Caco-2 (cell line): ENCODE measurements at regions of chr10 and their contacts with region 1.

Region 1: DNA sequence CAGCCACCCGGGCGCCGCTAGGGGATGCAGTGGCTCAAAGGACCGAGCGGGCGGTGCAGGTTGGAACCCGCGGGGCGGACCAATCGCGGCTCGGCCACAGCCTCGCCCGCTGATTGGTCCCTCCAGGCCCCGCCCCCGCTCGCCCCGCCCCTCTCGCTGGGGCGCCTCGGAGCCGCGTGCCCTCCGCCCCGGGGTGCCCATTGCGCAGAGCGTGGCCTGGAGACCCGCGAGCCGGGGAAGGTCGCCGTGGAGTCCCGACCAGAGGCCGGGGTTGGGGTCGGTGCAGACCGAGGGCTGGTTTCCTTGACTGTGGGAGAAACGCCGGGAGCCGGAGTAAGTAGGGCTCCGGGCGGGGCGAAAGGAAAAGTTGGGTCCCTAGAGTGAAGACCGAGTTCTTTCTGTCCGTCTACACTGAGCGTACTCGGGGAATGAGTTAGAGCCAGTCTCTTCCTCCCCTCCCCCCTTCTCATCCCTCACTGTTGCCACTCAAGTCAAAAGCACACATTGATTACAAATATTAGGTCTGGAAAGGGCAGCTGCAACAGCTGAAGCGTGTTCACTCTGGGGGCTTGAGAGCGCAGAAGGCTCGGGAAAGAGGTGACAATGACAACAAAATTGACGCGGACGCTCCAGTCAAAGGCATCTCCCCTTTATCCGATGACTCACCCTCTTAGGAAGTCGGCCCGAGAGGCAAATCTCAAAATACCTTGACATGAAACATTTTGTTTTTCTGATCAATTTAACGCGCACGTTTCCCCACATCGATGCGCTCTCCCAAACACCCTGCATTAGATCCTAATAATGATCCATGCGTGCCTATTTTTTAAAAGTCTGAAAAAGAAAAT is 820 bp upstream of the GATA3 start:
- DNase-seq: peak; percentile 93 to 98
- H3K4me3 ChIP-seq: peak overlapping the region; percentile 68
- H3K4me3 Mint-ChIP-seq: peak overlapping the region; percentile 87
- H3K27ac Mint-ChIP-seq: peak overlapping the region; percentile 87
- H3K4me1 ChIP-seq: peaks cover 27% of the 10 kb centered on the region
- H3K4me1 Mint-ChIP-seq: peaks cover 29% of the 10 kb centered on the region
- H3K27me3 ChIP-seq: no peaks in the 10 kb centered on the region
- H3K27me3 Mint-ChIP-seq: no peaks in the 10 kb centered on the region
- CTCF ChIP-seq: peak; percentile 96 to 98

Region 2: DNA sequence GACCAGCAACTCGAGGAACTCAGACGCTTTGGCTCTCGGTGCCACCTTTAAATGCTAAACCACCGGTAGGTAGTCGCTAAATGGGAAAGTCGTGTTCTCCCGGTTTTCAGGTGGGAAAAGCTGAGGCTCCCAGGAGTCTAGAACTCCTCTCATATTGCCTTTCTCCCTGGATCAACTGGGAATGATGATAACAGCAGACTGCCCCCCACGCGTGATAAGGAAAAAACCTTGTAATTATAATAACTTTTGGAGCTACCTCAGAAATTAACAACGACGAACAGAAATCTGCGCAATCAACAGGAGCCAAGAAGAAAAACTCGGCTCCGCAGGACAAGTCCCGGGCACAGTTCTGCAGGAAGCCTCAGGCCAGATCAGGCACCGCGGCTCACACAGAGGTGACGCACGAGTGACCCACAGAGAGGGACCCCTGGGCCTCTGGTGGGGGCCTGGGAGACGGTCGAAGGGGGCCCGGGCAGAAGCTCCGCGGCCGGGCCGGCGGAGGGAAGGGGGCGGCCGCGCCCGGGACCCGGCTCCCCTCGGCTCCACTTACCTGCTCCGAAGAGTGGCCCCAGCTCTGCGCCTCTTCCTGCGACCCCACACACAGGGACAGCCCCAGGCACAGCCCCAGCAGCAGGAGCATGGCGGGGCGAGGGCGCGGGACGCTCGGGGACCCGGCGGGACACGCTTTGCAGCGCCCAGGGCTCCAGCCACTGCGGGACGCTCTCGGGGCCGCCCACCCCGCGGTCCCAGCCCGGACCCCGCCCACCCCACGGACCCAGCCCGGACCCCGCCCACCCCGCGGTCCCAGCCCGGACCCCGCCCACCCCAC is 387.2 kb before region 1 on chr10 and contains the start of gene ITIH5:
- CTCF ChIA-PET with region 1: no interaction called
- POLR2A ChIA-PET with region 1: no interaction called
- intact Hi-C with region 1: no loop called
- DNase-seq: no peak
- H3K4me3 ChIP-seq: no peak within 1 kb of the TSS
- H3K4me3 Mint-ChIP-seq: no peak within 1 kb of the TSS
- H3K27ac Mint-ChIP-seq: no peak within 1 kb of the TSS
- H3K4me1 ChIP-seq: peaks cover 2% of the 10 kb centered on the region
- H3K4me1 Mint-ChIP-seq: peaks cover 7% of the 10 kb centered on the region
- H3K27me3 ChIP-seq: no peaks in the 10 kb centered on the region
- H3K27me3 Mint-ChIP-seq: no peaks in the 10 kb centered on the region
- CTCF ChIP-seq: no peak
- total RNA-seq, gene ITIH5: 0.18 and 0.51 TPM in 2 replicates

Region 3: GRCh38 chr10:7872041-7872442 is 181.6 kb before region 1 on chr10:
- CTCF ChIA-PET with region 1: interaction called, 3 read pairs
- POLR2A ChIA-PET with region 1: no interaction called
- intact Hi-C with region 1: loop called (anchors 5 kb)
- DNase-seq: peak in 1 of 2 experiments; percentile 21
- H3K4me3 ChIP-seq: peak overlapping the region; percentile 25
- H3K4me3 Mint-ChIP-seq: peak overlapping the region; percentile 66
- H3K27ac Mint-ChIP-seq: no peak overlapping the region
- H3K4me1 ChIP-seq: peaks cover 26% of the 10 kb centered on the region
- H3K4me1 Mint-ChIP-seq: peaks cover 11% of the 10 kb centered on the region
- H3K27me3 ChIP-seq: no peaks in the 10 kb centered on the region
- H3K27me3 Mint-ChIP-seq: no peaks in the 10 kb centered on the region
- CTCF ChIP-seq: peak; percentile 83

Region 4: DNA sequence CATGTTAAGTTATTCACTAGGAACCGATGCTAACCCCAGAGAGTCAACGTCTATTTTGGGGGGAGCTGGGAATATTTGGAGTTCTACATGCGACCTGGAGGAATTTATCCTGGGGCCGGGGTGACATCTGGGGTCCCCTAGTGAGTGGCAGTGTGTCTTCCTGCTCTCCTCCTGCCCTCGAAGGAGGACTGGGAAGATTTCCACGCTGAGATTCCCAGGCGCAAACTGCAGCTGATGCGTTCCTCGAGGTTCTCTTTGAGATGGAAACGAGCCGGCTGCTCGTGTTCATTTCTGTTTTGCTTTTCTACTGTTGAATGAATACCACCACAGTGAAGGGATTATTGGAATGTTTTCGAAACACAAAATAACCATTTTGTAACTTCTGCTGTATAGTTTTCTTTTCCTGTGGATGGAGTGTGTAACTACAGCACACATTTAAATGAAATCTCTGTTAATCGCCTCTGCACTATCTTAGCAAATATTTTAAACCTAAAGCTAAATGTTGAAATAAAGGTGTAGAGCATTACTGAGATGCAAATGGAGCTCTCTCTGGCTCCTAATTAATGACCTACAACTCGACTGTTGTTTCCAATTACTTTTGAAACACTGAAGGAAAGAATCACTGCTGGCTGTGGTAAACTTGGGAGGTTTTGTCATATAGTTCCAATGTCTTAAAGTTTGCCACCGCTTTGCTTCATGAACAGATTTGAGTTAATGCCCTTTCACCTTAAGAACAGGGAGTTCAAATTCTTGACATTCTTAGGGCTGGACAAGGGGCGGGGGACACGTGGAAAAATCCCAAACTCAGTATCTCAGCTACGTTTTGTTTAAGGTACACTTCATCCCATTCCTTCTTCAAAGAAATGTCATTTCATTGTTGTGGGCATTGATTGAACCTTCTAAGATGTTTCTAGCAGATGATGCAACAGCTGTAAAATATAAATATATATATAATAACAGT is 21.9 kb after region 1 on chr10:
- CTCF ChIA-PET with region 1: no interaction called
- POLR2A ChIA-PET with region 1: interaction called, 3 read pairs
- intact Hi-C with region 1: loop called (anchors 1 kb)
- DNase-seq: peak; percentile 85
- H3K4me3 ChIP-seq: no peak overlapping the region
- H3K4me3 Mint-ChIP-seq: peak overlapping the region; percentile 56
- H3K27ac Mint-ChIP-seq: peak overlapping the region; percentile 90
- H3K4me1 ChIP-seq: peaks cover 49% of the 10 kb centered on the region
- H3K4me1 Mint-ChIP-seq: peaks cover 58% of the 10 kb centered on the region
- H3K27me3 ChIP-seq: no peaks in the 10 kb centered on the region
- H3K27me3 Mint-ChIP-seq: no peaks in the 10 kb centered on the region
- CTCF ChIP-seq: no peak

Region 5: GRCh38 chr10:8193546-8193945 is 139.9 kb after region 1 on chr10:
- CTCF ChIA-PET with region 1: no interaction called
- POLR2A ChIA-PET with region 1: no interaction called
- intact Hi-C with region 1: loop called (anchors 5 kb)
- DNase-seq: no peak
- H3K4me3 ChIP-seq: no peak overlapping the region
- H3K4me3 Mint-ChIP-seq: peak overlapping the region; percentile 32
- H3K27ac Mint-ChIP-seq: peak overlapping the region; percentile 40
- H3K4me1 ChIP-seq: peaks cover 29% of the 10 kb centered on the region
- H3K4me1 Mint-ChIP-seq: peaks cover 10% of the 10 kb centered on the region
- H3K27me3 ChIP-seq: no peaks in the 10 kb centered on the region
- H3K27me3 Mint-ChIP-seq: no peaks in the 10 kb centered on the region
- CTCF ChIP-seq: no peak

Region 6: GRCh38 chr10:8444630-8445029 is 391.0 kb after region 1 on chr10:
- CTCF ChIA-PET with region 1: no interaction called
- POLR2A ChIA-PET with region 1: no interaction called
- intact Hi-C with region 1: loop called (anchors 5 kb)
- DNase-seq: peak in 1 of 2 experiments; percentile 40
- H3K4me3 ChIP-seq: no peak overlapping the region
- H3K4me3 Mint-ChIP-seq: no peak overlapping the region
- H3K27ac Mint-ChIP-seq: no peak overlapping the region
- H3K4me1 ChIP-seq: no peaks in the 10 kb centered on the region
- H3K4me1 Mint-ChIP-seq: no peaks in the 10 kb centered on the region
- H3K27me3 ChIP-seq: no peaks in the 10 kb centered on the region; the same call in 1 of the 2 replicates
- H3K27me3 Mint-ChIP-seq: peaks cover 5% of the 10 kb centered on the region
- CTCF ChIP-seq: peak; percentile 25 to 60

Region 7: DNA sequence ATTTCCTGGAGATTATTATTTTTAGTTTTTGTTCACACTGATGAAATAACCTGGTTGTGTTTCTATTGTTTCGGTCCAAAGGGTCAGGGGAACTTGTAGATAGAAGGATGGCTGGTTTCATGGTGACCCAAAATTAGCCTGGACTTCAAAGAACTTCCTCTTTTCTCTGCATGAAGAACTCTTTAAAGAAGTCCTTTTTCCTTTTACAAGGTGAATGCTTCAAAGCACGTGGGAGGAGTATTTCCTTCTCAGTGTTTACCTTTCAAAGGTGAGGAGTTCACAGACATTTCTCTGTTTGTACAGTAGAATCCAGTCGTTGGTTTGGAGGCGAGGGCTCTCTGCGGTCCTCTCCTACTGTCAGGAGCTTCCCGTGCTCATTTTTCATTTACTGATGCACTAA is 562.5 kb after region 1 on chr10:
- CTCF ChIA-PET with region 1: no interaction called
- POLR2A ChIA-PET with region 1: no interaction called
- intact Hi-C with region 1: loop called (anchors 1 kb)
- DNase-seq: peak; percentile 61 to 65
- H3K4me3 ChIP-seq: no peak overlapping the region
- H3K4me3 Mint-ChIP-seq: peak overlapping the region; percentile 12
- H3K27ac Mint-ChIP-seq: peak overlapping the region; percentile 40
- H3K4me1 ChIP-seq: peaks cover 23% of the 10 kb centered on the region
- H3K4me1 Mint-ChIP-seq: peaks cover 7% of the 10 kb centered on the region
- H3K27me3 ChIP-seq: no peaks in the 10 kb centered on the region
- H3K27me3 Mint-ChIP-seq: no peaks in the 10 kb centered on the region
- CTCF ChIP-seq: no peak

Region 8: GRCh38 chr10:9302120-9302746 is 1248.6 kb after region 1 on chr10:
- CTCF ChIA-PET with region 1: no interaction called
- POLR2A ChIA-PET with region 1: no interaction called
- intact Hi-C with region 1: loop called (anchors 10 kb)
- DNase-seq: peak in 1 of 2 experiments; percentile 53
- H3K4me3 ChIP-seq: no peak overlapping the region
- H3K4me3 Mint-ChIP-seq: no peak overlapping the region
- H3K27ac Mint-ChIP-seq: no peak overlapping the region
- H3K4me1 ChIP-seq: no peaks in the 10 kb centered on the region
- H3K4me1 Mint-ChIP-seq: no peaks in the 10 kb centered on the region
- H3K27me3 ChIP-seq: no peaks in the 10 kb centered on the region
- H3K27me3 Mint-ChIP-seq: peaks cover 7% of the 10 kb centered on the region
- CTCF ChIP-seq: peak; percentile 40 to 48